H1 (cell line): ENCODE measurements at regions of chr11 and their contacts with region 1.

Region 1: DNA sequence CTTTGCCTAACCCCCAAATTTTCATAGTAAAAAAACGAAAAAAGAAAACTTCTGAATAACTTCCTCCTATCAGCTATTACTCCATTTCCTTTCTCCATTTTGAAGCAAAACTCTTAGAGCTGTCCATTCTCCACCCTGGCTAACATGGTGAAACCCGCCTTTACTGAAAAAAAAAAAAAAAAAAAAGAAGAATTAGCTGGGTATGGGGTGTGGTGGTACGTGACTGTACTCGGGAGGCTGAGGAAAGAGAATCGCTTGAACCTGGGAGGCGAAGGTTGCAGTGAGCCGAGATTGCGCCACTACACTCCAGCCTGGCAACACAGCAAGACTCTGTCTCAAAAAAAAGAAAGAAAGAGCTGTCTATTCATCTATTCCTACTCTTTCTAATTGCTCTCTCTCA is 11.3 kb upstream of the NXF1 start:
- DNase-seq: no peak
- H3K4me3 ChIP-seq: no peak overlapping the region
- H3K27ac ChIP-seq: no peak overlapping the region
- H3K4me1 ChIP-seq: no peaks in the 10 kb centered on the region
- H3K27me3 ChIP-seq: no peaks in the 10 kb centered on the region
- CTCF ChIP-seq: no peak
- EP300 ChIP-seq: no peak
- POLR2A ChIP-seq: no peak
- RAD21 ChIP-seq: no peak

Region 2: GRCh38 chr11:62678770-62679696 is 137.5 kb before region 1 on chr11 and contains the start of gene UBXN1:
- CTCF ChIA-PET with region 1: no interaction called
- POLR2A ChIA-PET with region 1: no interaction called
- DNase-seq: peak in 1 of 2 experiments; percentile 88
- H3K4me3 ChIP-seq: peak within 1 kb of the TSS; percentile 78 to 98 (median 88)
- H3K27ac ChIP-seq: peak within 1 kb of the TSS; percentile 68
- H3K4me1 ChIP-seq: peaks cover 2 to 8% (median 4%) of the 10 kb centered on the region in 4 experiments; a peak in 4 of 7 replicates
- H3K27me3 ChIP-seq: no peaks in the 10 kb centered on the region
- CTCF ChIP-seq: no peak; a peak in 1 of 4 replicates
- EP300 ChIP-seq: no peak
- POLR2A ChIP-seq: peak; percentile 26 to 79
- RAD21 ChIP-seq: no peak
- total RNA-seq, gene UBXN1: 104 and 114 TPM in 2 replicates

Region 3: GRCh38 chr11:62794201-62794775 is 22.3 kb before region 1 on chr11:
- CTCF ChIA-PET with region 1: interaction called, 3 read pairs
- POLR2A ChIA-PET with region 1: interaction called, 30 read pairs
- DNase-seq: no peak
- H3K4me3 ChIP-seq: no peak overlapping the region
- H3K27ac ChIP-seq: no peak overlapping the region
- H3K4me1 ChIP-seq: peaks cover 0 to 7% (median 3%) of the 10 kb centered on the region in 4 experiments; a peak in 3 of 7 replicates
- H3K27me3 ChIP-seq: no peaks in the 10 kb centered on the region
- CTCF ChIP-seq: no peak
- EP300 ChIP-seq: no peak
- POLR2A ChIP-seq: no peak
- RAD21 ChIP-seq: no peak

Region 4: GRCh38 chr11:62896049-62896448 is 79.5 kb after region 1 on chr11:
- CTCF ChIA-PET with region 1: no interaction called
- POLR2A ChIA-PET with region 1: no interaction called
- DNase-seq: no peak
- H3K4me3 ChIP-seq: no peak overlapping the region
- H3K27ac ChIP-seq: no peak overlapping the region
- H3K4me1 ChIP-seq: peaks cover 0 to 4% (median 3%) of the 10 kb centered on the region in 4 experiments; a peak in 2 of 7 replicates
- H3K27me3 ChIP-seq: no peaks in the 10 kb centered on the region
- CTCF ChIP-seq: no peak
- EP300 ChIP-seq: no peak
- POLR2A ChIP-seq: no peak
- RAD21 ChIP-seq: no peak